Activated naive CD4-positive, alpha-beta T cell treated with anti-CD3 and anti-CD28 coated beads, Interleukin-2, amount 10 ng/mL, durations not matched to agents 7 days and 5 days (primary cell): ENCODE measurements at regions of chr7 and their contacts with region 1.

Region 1: DNA sequence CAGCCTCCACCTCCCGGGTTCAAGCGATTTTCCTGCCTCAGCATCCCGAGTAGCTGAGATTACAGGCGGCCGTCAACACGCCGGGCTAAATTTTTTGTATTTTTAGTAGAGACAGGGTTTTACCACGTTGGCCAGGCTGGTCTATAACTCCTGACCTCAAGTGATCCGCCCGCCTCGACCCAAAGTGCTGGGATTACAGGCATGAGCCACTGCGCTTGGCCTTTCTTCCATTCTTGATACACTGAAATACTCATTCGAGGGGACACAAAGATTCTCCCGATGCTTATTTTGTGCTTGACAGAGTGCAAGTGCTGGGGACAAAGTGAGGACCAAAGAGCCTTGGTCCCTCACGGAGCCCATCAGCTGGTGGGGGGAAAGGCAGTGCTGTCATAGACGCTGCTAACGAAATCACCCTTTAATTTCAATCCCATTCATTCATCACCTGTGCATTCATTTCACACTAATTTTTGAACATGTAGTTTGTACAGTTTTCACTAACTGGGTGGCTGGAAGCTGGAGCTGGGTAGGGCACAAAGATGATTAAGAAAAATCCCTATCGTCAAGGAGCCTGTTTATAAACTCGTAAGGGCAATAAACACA is 621 bp upstream of the FAM133B start:
- DNase-seq: no peak
- H3K4me3 Mint-ChIP-seq: peak overlapping the region; percentile 78
- H3K27ac Mint-ChIP-seq: no peak overlapping the region
- H3K4me1 Mint-ChIP-seq: peaks cover 39% of the 10 kb centered on the region
- H3K27me3 Mint-ChIP-seq: peaks cover 22% of the 10 kb centered on the region

Region 2: GRCh38 chr7:92517631-92518030 is 73.2 kb before region 1 on chr7:
- CTCF ChIA-PET with region 1: no interaction called
- DNase-seq: no peak
- H3K4me3 Mint-ChIP-seq: no peak overlapping the region
- H3K27ac Mint-ChIP-seq: no peak overlapping the region
- H3K4me1 Mint-ChIP-seq: no peaks in the 10 kb centered on the region
- H3K27me3 Mint-ChIP-seq: no peaks in the 10 kb centered on the region

Region 3: GRCh38 chr7:92602352-92603088 is 11.7 kb after region 1 on chr7:
- CTCF ChIA-PET with region 1: interaction called, 10 read pairs
- DNase-seq: no peak
- H3K4me3 Mint-ChIP-seq: no peak overlapping the region
- H3K27ac Mint-ChIP-seq: no peak overlapping the region
- H3K4me1 Mint-ChIP-seq: no peaks in the 10 kb centered on the region
- H3K27me3 Mint-ChIP-seq: no peaks in the 10 kb centered on the region